Mammary epithelial cell (primary cell): ENCODE measurements at regions of chr7 and their contacts with region 1.

Region 1: GRCh38 chr7:73522105-73522872 is at the start of gene BAZ1B:
- DNase-seq: peak; percentile 98
- H3K4me3 ChIP-seq: peak within 1 kb of the TSS; percentile 79 to 85 (median 79)
- H3K27ac ChIP-seq: peak within 1 kb of the TSS; percentile 60
- H3K4me1 ChIP-seq: peaks cover 8% of the 10 kb centered on the region
- H3K27me3 ChIP-seq: no peaks in the 10 kb centered on the region
- CTCF ChIP-seq: peak in 1 of 2 donors; percentile 28
- total RNA-seq, gene BAZ1B: 34.5 to 68.4 TPM

Region 2: GRCh38 chr7:73533742-73534141 is 11.5 kb after region 1 on chr7:
- CTCF ChIA-PET with region 1: interaction called, 11 read pairs
- dilution Hi-C with region 1: no loop called
- in situ Hi-C with region 1: no loop called
- intact Hi-C with region 1: no loop called
- DNase-seq: no peak
- H3K4me3 ChIP-seq: no peak overlapping the region
- H3K27ac ChIP-seq: no peak overlapping the region
- H3K4me1 ChIP-seq: peaks cover 2% of the 10 kb centered on the region
- H3K27me3 ChIP-seq: no peaks in the 10 kb centered on the region
- CTCF ChIP-seq: no peak

Region 3: DNA sequence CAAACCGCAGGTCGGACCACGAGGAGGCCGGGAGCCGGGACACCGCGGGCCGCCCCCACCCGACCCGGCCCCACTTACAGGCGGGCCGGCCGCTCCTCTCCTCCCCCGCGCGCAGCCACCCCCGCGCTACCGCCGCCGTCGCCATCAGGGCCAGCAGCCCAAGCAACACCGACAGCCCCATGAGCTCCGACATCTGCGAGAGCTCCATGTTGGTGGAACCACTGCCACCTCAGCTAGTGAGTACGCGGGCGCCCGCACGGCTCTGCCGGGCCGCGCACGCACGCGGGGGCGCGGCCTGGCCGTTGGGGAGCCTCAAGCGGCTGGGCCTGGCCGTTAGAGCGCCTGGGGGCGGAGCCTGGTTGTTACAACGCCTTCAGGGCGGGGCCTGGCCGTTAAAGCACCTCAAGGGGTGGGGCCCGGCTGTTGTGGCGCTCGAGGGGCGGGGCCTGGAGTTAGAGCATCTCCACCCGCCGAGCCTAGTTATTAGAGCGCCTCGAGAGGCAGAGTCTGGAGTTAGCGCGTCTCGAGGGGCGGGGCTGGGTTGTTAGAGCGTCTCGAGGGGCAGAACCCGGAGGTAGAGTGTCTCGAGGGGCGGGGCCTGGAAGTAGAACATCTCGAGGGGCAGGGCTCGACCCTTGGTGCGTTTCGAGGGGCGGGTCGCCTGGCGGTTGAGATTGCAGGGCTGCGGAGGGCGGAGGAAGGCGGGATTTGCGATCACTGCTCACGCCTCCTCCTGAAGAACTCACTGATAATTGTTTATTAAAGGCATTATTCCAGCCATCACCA is 56.2 kb after region 1 on chr7 and contains the start of gene TBL2:
- CTCF ChIA-PET with region 1: no interaction called
- dilution Hi-C with region 1: no loop called
- in situ Hi-C with region 1: no loop called
- intact Hi-C with region 1: loop called (anchors 1 kb)
- DNase-seq: peak; percentile 97
- H3K4me3 ChIP-seq: peak within 1 kb of the TSS; percentile 91 to 99 (median 97)
- H3K27ac ChIP-seq: peak within 1 kb of the TSS; percentile 73
- H3K4me1 ChIP-seq: peaks cover 13% of the 10 kb centered on the region
- H3K27me3 ChIP-seq: no peaks in the 10 kb centered on the region
- CTCF ChIP-seq: peak in 1 of 2 donors; percentile 41
- total RNA-seq, gene TBL2: 30.0 to 34.5 TPM

Region 4: DNA sequence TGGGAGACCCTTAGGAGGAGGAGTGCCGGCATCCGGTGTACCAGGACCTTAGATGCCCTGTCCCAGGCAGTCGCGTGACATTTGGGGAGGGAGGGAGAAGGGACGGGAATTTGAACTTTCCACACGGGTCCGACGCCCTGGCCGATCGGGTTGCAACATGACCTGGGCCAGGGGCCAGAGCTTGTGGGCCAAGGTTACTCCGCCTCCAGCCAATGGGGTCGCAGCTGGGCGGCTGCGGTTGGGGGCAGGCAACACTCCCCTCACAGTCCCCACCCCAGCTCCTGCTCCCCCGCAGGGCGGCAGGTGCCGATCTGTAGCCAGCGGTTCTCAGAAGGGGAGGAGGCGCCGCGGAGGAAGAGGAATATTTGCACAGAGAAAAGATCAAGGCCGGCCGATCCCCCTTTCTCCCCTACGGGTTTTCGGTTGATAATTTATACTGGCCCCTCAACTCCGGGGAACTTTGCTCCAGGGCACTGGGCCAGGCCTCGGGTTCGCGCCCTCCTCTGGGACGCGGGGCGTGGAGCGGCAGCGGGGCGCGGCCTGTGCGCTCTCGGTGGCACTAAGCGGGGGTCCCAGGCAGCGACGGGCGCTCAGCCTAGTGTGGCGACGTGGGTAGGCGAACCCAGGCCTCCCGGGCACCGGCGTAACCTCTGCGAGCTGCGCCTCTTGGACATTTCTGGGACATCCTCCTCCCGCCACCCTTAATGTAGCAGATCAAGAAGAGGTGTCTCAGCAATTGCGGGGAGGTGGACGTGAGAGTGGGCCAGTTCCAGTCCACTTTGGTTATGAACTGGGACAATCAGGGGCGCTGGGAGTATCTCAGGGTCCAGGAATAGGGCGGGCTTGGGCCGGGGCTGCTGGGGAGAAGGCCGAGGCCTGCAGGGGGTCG is 100.9 kb after region 1 on chr7:
- CTCF ChIA-PET with region 1: no interaction called
- dilution Hi-C with region 1: no loop called
- in situ Hi-C with region 1: no loop called
- intact Hi-C with region 1: no loop called
- DNase-seq: no peak
- H3K4me3 ChIP-seq: no peak overlapping the region
- H3K27ac ChIP-seq: no peak overlapping the region
- H3K4me1 ChIP-seq: peaks cover 14% of the 10 kb centered on the region
- H3K27me3 ChIP-seq: peaks cover 14% of the 10 kb centered on the region
- CTCF ChIP-seq: no peak

Region 5: GRCh38 chr7:73718905-73719805 is 196.9 kb after region 1 on chr7 and contains the start of gene STX1A:
- CTCF ChIA-PET with region 1: no interaction called
- dilution Hi-C with region 1: no loop called
- in situ Hi-C with region 1: no loop called
- intact Hi-C with region 1: loop called (anchors 5 kb)
- DNase-seq: peak; percentile 58
- H3K4me3 ChIP-seq: peak within 1 kb of the TSS; percentile 84 to 99 (median 92)
- H3K27ac ChIP-seq: peak within 1 kb of the TSS; percentile 68
- H3K4me1 ChIP-seq: peaks cover 45% of the 10 kb centered on the region
- H3K27me3 ChIP-seq: no peaks in the 10 kb centered on the region
- CTCF ChIP-seq: no peak
- total RNA-seq, gene STX1A: 6.8 to 39.7 TPM